Breast epithelium (tissue), 4 donors: ENCODE measurements at regions of chr3 and their contacts with region 1.

Region 1: GRCh38 chr3:19543212-19543841 is 390.7 kb downstream of the EFHB start:
- DNase-seq: no peak
- H3K4me3 ChIP-seq: no peak overlapping the region
- H3K27ac ChIP-seq: no peak overlapping the region
- H3K4me1 ChIP-seq: no peaks in the 10 kb centered on the region
- H3K27me3 ChIP-seq: no peaks in the 10 kb centered on the region
- CTCF ChIP-seq: no peak
- POLR2A ChIP-seq: no peak

Region 2: GRCh38 chr3:19489936-19490335 is 53.4 kb before region 1 on chr3:
- intact Hi-C with region 1: loop called (anchors 2 kb)
- DNase-seq: no peak
- H3K4me3 ChIP-seq: no peak overlapping the region
- H3K27ac ChIP-seq: no peak overlapping the region
- H3K4me1 ChIP-seq: no peaks in the 10 kb centered on the region
- H3K27me3 ChIP-seq: no peaks in the 10 kb centered on the region
- CTCF ChIP-seq: no peak
- POLR2A ChIP-seq: no peak

Region 3: GRCh38 chr3:20537234-20537633 is 993.9 kb after region 1 on chr3:
- intact Hi-C with region 1: no loop called
- DNase-seq: no peak
- H3K4me3 ChIP-seq: no peak overlapping the region
- H3K27ac ChIP-seq: no peak overlapping the region
- H3K4me1 ChIP-seq: no peaks in the 10 kb centered on the region
- H3K27me3 ChIP-seq: no peaks in the 10 kb centered on the region
- CTCF ChIP-seq: no peak
- POLR2A ChIP-seq: no peak

Region 4: DNA sequence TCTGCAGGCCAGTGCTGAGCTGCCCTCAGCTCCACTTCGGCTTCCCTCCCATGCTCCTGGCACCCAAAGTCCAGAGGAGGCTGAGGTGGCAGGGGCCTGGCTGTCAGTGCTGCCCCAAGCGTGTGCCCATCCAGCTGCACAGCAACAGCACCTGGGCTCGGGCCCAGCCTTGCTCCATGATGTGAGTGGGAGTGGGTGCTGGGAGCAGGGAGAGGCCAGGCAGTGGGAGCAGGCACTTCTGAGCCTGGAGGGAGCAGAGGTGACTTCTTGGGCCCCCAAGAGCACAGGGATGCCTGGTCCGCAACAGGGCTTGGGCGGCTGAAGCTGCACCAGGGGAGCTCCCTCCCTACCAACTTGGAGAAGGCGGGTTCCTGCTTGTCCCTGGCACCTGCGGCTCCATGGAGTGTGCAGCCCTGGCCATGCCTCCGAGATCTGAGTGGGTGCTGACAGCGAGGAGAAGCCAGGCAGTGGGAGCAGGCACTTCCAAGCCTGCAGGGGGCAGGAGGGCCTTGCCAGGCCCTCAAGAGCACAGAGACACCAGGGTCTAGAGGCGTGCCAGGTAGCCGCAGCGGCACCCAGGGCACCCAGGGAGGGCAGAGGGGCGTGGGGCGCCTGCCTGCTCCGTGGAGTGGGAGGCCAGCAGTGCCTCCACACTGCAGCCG is 1009.4 kb after region 1 on chr3:
- intact Hi-C with region 1: no loop called
- DNase-seq: no peak
- H3K4me3 ChIP-seq: no peak overlapping the region
- H3K27ac ChIP-seq: no peak overlapping the region
- H3K4me1 ChIP-seq: no peaks in the 10 kb centered on the region
- H3K27me3 ChIP-seq: no peaks in the 10 kb centered on the region
- CTCF ChIP-seq: no peak
- POLR2A ChIP-seq: no peak